Psoas muscle (tissue), 8 donors: ENCODE measurements at regions of chr19 and their contacts with region 1.

Region 1: GRCh38 chr19:40584007-40584406 is 7.3 kb downstream of the SHKBP1 start:
- DNase-seq: no peak
- ATAC-seq: no peak
- H3K4me3 ChIP-seq: no peak overlapping the region
- H3K27ac ChIP-seq: no peak overlapping the region
- H3K4me1 ChIP-seq: no peaks in the 10 kb centered on the region
- H3K27me3 ChIP-seq: no peaks in the 10 kb centered on the region
- CTCF ChIP-seq: no peak

Region 2: GRCh38 chr19:40472516-40472915 is 111.5 kb before region 1 on chr19:
- intact Hi-C with region 1: loop called in 1 of 2 experiments (anchors 10 kb)
- DNase-seq: no peak
- ATAC-seq: no peak
- H3K4me3 ChIP-seq: no peak overlapping the region
- H3K27ac ChIP-seq: no peak overlapping the region
- H3K4me1 ChIP-seq: no peaks in the 10 kb centered on the region
- H3K27me3 ChIP-seq: no peaks in the 10 kb centered on the region
- CTCF ChIP-seq: no peak

Region 3: GRCh38 chr19:40542202-40542859 is 41.7 kb before region 1 on chr19:
- intact Hi-C with region 1: no loop called
- DNase-seq: peak; percentile 37 to 80
- ATAC-seq: peak in 3 of 4 donors; percentile 13 to 52 (median 19)
- H3K4me3 ChIP-seq: no peak overlapping the region
- H3K27ac ChIP-seq: no peak overlapping the region
- H3K4me1 ChIP-seq: no peaks in the 10 kb centered on the region
- H3K27me3 ChIP-seq: no peaks in the 10 kb centered on the region
- CTCF ChIP-seq: no peak

Region 4: DNA sequence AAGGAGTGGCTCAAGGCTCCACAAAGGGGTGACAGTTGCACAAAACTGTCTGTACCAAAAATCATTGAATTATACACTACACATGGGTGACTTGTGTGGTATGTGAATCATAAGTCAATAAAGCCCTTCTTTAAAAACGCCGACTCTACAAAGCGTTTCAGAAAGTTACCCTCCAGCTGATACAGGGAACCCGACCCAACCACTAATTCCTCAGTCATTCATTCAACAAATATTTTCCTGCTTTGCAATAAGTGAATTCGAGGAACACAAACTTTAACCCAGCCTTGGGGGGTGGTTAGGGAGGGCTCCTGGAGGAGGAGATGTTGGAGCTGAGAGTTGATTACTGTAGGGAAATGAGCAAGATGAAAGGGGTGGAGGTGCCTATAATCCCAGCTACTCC is 49.2 kb after region 1 on chr19:
- intact Hi-C with region 1: no loop called
- DNase-seq: no peak
- ATAC-seq: no peak
- H3K4me3 ChIP-seq: no peak overlapping the region
- H3K27ac ChIP-seq: no peak overlapping the region
- H3K4me1 ChIP-seq: no peaks in the 10 kb centered on the region
- H3K27me3 ChIP-seq: no peaks in the 10 kb centered on the region
- CTCF ChIP-seq: no peak